Common myeloid progenitor, CD34-positive (primary cell): ENCODE measurements at regions of chr17 and their contacts with region 1.

Region 1: DNA sequence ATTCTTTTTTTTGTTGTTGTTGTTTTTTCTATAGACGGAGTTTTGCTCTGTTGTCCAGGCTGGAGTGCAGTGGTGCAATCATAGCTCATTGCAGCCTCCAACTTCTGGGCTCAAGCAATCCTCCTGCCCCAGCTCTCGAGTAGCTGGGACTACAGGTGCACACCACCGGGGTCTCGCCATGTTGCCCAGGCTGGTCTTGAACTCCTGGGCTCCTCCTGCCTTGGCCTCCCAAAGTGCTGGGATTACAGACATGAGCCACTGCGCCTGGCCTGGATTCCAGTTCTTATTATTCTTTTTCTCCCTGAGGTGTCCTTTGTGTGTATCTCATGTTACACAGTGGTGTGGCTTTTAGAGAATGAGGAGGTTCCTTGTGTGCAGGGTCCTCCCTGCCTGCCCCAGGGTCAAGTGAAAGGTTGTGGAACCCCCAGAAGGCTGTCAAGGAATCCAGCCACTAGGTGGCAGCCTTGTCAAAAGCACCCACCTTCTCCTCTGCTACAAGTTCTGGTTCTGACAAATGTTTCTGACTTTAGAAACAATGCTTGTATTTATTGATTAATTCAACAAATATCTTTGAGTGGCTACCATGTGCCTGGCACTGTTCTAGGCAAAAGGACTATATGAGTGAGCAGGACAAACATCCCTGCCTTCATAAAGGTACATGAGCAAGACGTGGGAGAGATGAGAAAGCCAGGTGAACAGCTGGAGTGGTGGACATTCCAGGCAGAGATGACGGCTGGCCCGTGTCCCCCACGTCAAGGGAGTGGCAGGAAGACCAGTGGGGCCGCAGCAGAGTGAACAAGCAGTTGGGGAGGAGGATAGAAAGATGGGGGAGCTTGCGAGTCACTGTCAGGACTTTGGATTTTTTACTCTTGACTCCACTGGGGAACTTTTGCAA is 112.4 kb downstream of the SPECC1 start:
- DNase-seq: peak; percentile 63 to 72 (median 63)
- H3K4me3 ChIP-seq: no peak overlapping the region
- H3K27ac ChIP-seq: no peak overlapping the region
- H3K4me1 ChIP-seq: no peaks in the 10 kb centered on the region
- H3K27me3 ChIP-seq: no peaks in the 10 kb centered on the region

Region 2: DNA sequence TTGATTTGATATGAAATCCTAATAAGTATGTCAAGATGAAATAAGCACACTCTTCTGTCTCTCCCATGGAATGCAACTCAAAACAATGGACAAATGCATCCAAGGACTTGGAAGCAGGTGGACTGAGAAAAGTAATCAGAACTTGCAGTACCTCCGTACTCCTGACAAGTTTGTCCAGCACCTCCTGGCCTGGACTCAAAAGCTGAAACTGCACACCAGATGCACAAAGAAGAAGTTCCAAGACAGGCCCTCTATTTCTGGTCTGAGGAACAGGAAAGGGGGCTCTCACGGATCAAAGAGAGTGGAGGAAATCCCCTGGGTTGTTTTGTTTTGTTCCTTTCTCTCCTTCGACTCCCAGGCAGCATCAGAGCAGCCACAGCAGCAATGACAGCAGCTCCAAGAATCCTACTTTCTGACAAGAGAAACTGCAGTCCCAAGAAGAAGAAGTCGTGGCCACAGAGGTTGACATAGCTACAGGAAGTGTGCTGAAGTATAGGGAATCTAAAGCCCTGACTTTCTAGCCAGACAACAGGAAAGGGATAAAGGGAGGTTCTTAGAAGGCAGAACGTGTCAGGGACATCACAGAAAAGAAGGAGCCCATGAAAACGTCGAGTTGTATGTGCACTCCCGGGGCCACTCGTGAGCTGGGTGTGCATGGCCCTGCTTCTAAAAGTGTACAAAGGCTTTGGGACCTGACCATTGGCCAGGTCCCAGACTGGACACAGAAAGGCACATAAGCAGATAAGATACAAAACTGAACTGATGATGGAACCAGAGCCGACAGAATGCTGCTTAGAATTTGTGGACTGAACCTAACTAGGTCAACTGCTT is 173.3 kb before region 1 on chr17:
- CTCF ChIA-PET with region 1: no interaction called
- POLR2A ChIA-PET with region 1: no interaction called
- DNase-seq: peak in 2 of 3 donors; percentile 55 to 73
- H3K4me3 ChIP-seq: peak overlapping the region in 1 of 7 experiments; percentile 25
- H3K27ac ChIP-seq: peak overlapping the region; percentile 47 to 61
- H3K4me1 ChIP-seq: peaks cover 0 to 18% (median 9%) of the 10 kb centered on the region in 4 experiments
- H3K27me3 ChIP-seq: no peaks in the 10 kb centered on the region

Region 3: GRCh38 chr17:19992803-19993713 is 128.5 kb before region 1 on chr17:
- CTCF ChIA-PET with region 1: interaction called, 18 read pairs
- POLR2A ChIA-PET with region 1: no interaction called
- DNase-seq: peak; percentile 92 to 95 (median 94)
- H3K4me3 ChIP-seq: peak overlapping the region in 4 of 7 experiments; percentile 19 to 48 (median 36)
- H3K27ac ChIP-seq: no peak overlapping the region
- H3K4me1 ChIP-seq: peaks cover 0 to 15% (median 8%) of the 10 kb centered on the region in 4 experiments
- H3K27me3 ChIP-seq: no peaks in the 10 kb centered on the region

Region 4: DNA sequence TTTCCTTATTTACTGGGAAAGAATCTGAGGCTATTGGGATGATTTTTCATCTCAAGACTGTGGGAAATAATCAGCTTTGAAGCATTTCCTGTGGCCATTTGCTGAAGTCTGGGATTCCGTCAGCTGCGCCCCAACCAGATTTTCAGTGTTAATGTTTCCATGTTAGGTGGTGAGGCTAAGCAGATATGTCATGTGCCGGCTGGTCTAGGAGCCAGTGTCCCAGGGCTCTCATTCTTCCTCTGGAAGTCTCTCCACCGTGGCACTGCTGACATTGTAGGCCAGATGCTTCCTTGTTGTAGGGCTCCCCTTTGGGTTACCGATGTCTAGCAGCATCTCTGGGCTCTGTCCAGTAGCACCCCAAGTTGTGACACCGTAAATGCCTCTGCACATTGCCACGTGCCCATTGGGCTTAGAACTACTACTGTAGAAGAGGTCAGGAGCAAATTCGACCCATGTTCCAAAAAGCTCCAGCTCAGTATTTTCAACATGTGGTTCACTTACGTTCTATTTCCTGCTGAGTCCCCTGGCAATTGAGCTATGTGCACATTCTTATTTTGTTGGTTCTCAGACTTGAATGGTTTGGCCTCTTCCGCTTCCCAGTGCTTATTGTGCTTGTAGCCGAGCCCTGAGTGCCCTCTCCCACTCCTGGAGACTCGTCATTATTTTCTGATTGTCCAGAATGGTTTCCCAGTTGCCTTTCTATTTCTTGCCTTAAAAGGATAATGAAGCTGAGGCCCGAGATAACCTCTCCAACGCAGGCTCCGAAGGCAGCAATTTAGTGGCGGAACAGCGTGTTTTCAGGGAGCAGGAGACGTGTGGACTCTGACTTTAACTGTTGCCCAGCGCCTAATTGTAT is 30.2 kb before region 1 on chr17:
- CTCF ChIA-PET with region 1: interaction called, 15 read pairs
- POLR2A ChIA-PET with region 1: no interaction called
- DNase-seq: no peak
- H3K4me3 ChIP-seq: no peak overlapping the region
- H3K27ac ChIP-seq: no peak overlapping the region
- H3K4me1 ChIP-seq: peaks cover 0 to 11% (median 7%) of the 10 kb centered on the region in 4 experiments
- H3K27me3 ChIP-seq: no peaks in the 10 kb centered on the region